HAP-1 (cell line): ENCODE measurements at regions of chrX and their contacts with region 1.

Region 1: DNA sequence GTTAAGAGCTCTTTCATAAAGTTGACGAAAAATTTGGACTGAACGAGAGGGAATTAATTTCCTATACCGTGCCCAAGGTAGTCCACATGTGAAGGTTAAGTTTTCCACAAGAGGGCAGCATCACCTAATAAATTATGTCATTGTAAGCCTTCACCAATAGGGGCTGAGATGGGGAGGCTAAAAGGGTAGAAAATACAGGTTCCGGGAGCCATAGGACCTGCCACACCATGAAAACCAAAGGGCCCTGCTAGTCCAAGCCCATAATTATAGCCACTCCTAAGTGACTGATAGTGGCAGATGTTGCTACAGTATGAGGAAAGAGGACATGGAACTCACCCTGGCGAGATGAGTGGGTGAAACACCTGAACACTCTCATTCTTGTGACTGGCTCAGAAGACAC is 122.2 kb downstream of the SHROOM4 start:
- DNase-seq: peak; percentile 65 to 74
- H3K4me3 ChIP-seq: no peak overlapping the region
- H3K4me1 ChIP-seq: peaks cover 2% of the 10 kb centered on the region; the same call in 1 of the 2 replicates
- H3K27me3 ChIP-seq: no peaks in the 10 kb centered on the region

Region 2: GRCh38 chrX:50905334-50905733 is 213.5 kb after region 1 on chrX:
- in situ Hi-C with region 1: loop called (anchors 10 kb)
- DNase-seq: peak in 1 of 2 experiments; percentile 31
- H3K4me3 ChIP-seq: no peak overlapping the region
- H3K4me1 ChIP-seq: 0 out of 2 replicates have a peak, but pooled peaks cover 3% of the 10 kb centered on the region
- H3K27me3 ChIP-seq: 0 out of 2 replicates have a peak, but pooled peaks cover 3% of the 10 kb centered on the region

Region 3: DNA sequence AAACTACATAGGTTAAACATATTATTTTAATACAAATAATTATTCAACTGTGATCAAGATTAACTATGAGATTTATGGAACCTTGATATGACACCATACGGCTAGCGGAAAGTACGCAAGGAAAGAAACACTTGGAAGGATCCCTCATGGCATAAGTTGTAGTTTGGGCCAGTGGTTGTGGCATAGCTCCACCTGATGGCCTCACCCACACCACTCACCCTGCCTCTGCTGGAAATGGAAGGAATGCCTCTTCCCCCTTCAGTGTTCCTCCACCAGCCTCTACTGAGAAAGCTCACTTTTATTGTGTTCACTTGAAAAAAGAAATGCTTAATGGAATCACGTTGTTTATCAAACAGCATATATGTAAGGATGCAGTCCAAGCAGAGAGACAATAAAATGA is 305.1 kb after region 1 on chrX:
- in situ Hi-C with region 1: loop called (anchors 10 kb)
- DNase-seq: peak in 1 of 2 experiments; percentile 15
- H3K4me3 ChIP-seq: no peak overlapping the region
- H3K4me1 ChIP-seq: no peaks in the 10 kb centered on the region
- H3K27me3 ChIP-seq: no peaks in the 10 kb centered on the region

Region 4: GRCh38 chrX:51047836-51048349 is 356.1 kb after region 1 on chrX:
- in situ Hi-C with region 1: no loop called
- DNase-seq: no peak
- H3K4me3 ChIP-seq: no peak overlapping the region
- H3K4me1 ChIP-seq: no peaks in the 10 kb centered on the region
- H3K27me3 ChIP-seq: peaks cover 8% of the 10 kb centered on the region; the same call in 1 of the 2 replicates